Activated naive CD4-positive, alpha-beta T cell treated with anti-CD3 and anti-CD28 coated beads for 36 hours (primary cell): ENCODE measurements at regions of chr13 and their contacts with region 1.

Region 1: GRCh38 chr13:20924758-20925394 is 22.3 kb upstream of the XPO4 start:
- DNase-seq: peak; percentile 89
- H3K4me3 Mint-ChIP-seq: no peak overlapping the region
- H3K27ac Mint-ChIP-seq: no peak overlapping the region
- H3K4me1 Mint-ChIP-seq: no peaks in the 10 kb centered on the region
- H3K27me3 Mint-ChIP-seq: no peaks in the 10 kb centered on the region

Region 2: DNA sequence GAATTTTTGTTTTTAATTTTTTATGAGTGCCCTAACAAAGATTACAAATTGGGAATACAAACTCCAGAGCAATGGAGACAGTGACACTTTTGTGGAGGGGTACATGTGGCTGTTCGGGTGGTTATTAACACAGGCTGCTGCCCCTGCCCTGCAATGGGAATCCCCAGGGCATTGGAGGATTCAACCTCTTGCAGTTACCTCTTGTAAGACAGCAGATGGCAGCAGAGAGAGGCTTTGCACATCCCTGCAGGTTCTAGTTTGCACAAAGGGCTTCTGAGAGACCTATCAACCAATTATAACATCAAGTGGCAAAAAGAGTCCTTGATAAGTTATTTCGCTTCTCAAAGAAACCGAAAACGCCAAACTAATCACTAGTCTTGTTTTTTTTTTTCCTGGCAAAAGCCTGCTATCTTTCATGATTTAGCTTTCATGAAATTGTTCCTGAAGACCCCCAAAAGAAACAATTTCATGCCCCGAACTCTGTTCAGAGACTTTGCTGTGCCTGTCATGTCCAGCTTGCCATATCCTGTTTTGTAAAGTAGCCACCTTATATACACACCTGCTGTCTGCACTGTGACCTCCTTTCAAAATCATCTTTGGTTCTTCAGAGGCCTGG is 742.5 kb before region 1 on chr13:
- CTCF ChIA-PET with region 1: interaction called, 3 read pairs
- intact Hi-C with region 1: loop called (anchors 1 kb)
- DNase-seq: peak; percentile 54
- H3K4me3 Mint-ChIP-seq: no peak overlapping the region
- H3K27ac Mint-ChIP-seq: no peak overlapping the region
- H3K4me1 Mint-ChIP-seq: no peaks in the 10 kb centered on the region
- H3K27me3 Mint-ChIP-seq: peaks cover 30% of the 10 kb centered on the region

Region 3: DNA sequence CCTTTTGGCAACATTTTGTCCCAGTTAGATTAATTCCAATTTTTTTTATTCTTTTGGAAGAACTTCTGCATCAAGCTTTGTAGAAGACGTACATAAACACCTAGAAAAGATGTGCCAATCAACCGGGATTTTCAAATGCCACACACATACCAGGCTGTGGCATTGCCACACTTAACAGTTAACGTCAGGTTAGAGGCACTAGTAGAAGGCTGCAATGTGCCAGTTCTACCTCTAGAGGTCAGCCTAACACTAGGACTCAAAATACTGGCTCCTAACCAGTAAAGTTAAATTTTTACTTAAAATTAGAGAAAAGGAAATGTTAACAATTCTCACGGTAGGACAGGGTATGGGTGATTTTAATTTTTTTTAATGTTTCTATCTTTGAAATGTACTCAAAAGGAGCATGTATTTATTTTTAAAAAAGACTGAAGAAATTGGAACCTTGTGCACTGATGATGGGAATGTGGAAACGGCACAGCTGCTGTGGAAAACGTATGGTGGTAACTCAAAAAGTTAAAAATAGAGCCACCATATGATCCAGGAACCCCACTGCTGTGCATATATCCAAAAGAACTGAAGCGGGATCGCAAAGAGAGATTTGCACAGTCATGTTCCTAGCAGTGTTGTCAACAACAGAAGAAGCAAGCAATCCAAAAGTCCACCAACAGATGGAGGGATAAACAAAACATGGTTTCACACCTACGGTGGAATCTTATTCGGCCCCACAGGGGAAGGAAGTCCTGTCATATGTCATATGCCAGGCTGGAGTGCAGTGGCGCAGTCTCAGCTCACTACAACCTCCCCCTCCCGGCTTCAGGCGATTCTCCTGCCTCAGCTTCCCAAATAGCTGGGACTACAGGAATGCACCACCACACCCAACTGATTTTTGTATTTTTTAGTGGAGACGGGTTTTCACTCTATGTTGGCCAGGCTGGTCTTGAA is 429.5 kb before region 1 on chr13:
- CTCF ChIA-PET with region 1: interaction called, 50 read pairs
- intact Hi-C with region 1: loop called (anchors 1 kb)
- DNase-seq: peak; percentile 81
- H3K4me3 Mint-ChIP-seq: no peak overlapping the region
- H3K27ac Mint-ChIP-seq: no peak overlapping the region
- H3K4me1 Mint-ChIP-seq: no peaks in the 10 kb centered on the region
- H3K27me3 Mint-ChIP-seq: no peaks in the 10 kb centered on the region

Region 4: GRCh38 chr13:20512042-20512683 is 412.7 kb before region 1 on chr13:
- CTCF ChIA-PET with region 1: interaction called, 12 read pairs
- intact Hi-C with region 1: no loop called
- DNase-seq: no peak
- H3K4me3 Mint-ChIP-seq: no peak overlapping the region
- H3K27ac Mint-ChIP-seq: no peak overlapping the region
- H3K4me1 Mint-ChIP-seq: no peaks in the 10 kb centered on the region
- H3K27me3 Mint-ChIP-seq: no peaks in the 10 kb centered on the region

Region 5: DNA sequence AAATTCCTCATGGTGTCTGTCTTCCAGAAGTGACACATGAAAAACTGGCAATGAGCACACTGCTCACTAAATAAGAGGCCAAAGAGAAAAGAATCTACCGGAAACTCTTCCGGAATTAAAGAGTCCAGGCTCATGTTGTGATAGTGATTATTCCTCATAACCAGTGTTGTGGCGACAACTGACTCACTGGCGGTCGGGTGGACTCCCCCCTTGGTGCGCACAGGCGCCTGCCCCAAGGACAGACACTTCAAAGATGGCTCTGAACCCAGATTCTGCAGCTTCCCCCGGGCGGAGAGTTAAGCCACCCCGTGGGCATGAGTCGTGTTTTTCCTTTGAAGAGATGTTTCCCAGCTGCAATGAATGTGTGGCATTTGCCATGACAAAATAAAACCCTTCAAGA is 211.1 kb before region 1 on chr13:
- CTCF ChIA-PET with region 1: interaction called, 10 read pairs
- intact Hi-C with region 1: loop called (anchors 1 kb)
- DNase-seq: no peak
- H3K4me3 Mint-ChIP-seq: no peak overlapping the region
- H3K27ac Mint-ChIP-seq: no peak overlapping the region
- H3K4me1 Mint-ChIP-seq: peaks cover 5% of the 10 kb centered on the region
- H3K27me3 Mint-ChIP-seq: peaks cover 8% of the 10 kb centered on the region

Region 6: DNA sequence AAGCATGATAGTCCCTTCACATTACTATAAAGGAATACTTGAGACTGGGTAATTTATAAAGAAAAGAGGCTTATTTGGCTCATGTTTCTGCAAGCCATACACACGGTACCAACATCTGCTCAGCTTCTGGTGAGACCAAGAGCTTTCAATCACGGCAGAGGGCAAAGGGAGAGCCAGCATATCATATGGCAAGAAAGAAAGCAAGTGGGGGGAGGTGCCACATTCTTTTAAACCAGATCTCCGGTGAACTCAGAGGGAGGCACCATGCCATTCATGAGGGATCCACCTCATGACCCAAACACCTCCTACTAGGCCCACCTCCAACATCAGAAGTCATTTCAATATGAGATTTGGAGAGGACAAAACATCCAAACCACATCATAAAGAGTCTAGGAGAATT is 42.7 kb before region 1 on chr13:
- CTCF ChIA-PET with region 1: no interaction called
- intact Hi-C with region 1: no loop called
- DNase-seq: no peak
- H3K4me3 Mint-ChIP-seq: no peak overlapping the region
- H3K27ac Mint-ChIP-seq: no peak overlapping the region
- H3K4me1 Mint-ChIP-seq: peaks cover 39% of the 10 kb centered on the region
- H3K27me3 Mint-ChIP-seq: no peaks in the 10 kb centered on the region